Naive thymus-derived CD4-positive, alpha-beta T cell (primary cell): ENCODE measurements at regions of chr16 and their contacts with region 1.

Region 1: GRCh38 chr16:3530371-3530914 is 29.6 kb downstream of the CLUAP1 start:
- DNase-seq: no peak
- ATAC-seq: no peak
- H3K4me3 ChIP-seq: no peak overlapping the region
- H3K4me3 Mint-ChIP-seq: no peak overlapping the region
- H3K27ac ChIP-seq: no peak overlapping the region
- H3K27ac Mint-ChIP-seq: peak overlapping the region in 2 of 9 donors; percentile 17 to 56
- H3K4me1 ChIP-seq: no peaks in the 10 kb centered on the region
- H3K4me1 Mint-ChIP-seq: peaks cover 12 to 40% (median 32%) of the 10 kb centered on the region in 7 donors
- H3K27me3 ChIP-seq: no peaks in the 10 kb centered on the region
- H3K27me3 Mint-ChIP-seq: no peaks in the 10 kb centered on the region

Region 2: GRCh38 chr16:3590736-3591435 is 60.4 kb after region 1 on chr16:
- CTCF ChIA-PET with region 1: no interaction called
- POLR2A ChIA-PET with region 1: no interaction called
- intact Hi-C with region 1: no loop called
- DNase-seq: no peak
- ATAC-seq: no peak
- H3K4me3 ChIP-seq: no peak overlapping the region
- H3K4me3 Mint-ChIP-seq: no peak overlapping the region
- H3K27ac ChIP-seq: no peak overlapping the region
- H3K27ac Mint-ChIP-seq: peak overlapping the region in 1 of 9 donors; percentile 31
- H3K4me1 ChIP-seq: no peaks in the 10 kb centered on the region
- H3K4me1 Mint-ChIP-seq: peaks cover 0 to 11% (median 4%) of the 10 kb centered on the region in 7 donors
- H3K27me3 ChIP-seq: no peaks in the 10 kb centered on the region
- H3K27me3 Mint-ChIP-seq: no peaks in the 10 kb centered on the region

Region 3: DNA sequence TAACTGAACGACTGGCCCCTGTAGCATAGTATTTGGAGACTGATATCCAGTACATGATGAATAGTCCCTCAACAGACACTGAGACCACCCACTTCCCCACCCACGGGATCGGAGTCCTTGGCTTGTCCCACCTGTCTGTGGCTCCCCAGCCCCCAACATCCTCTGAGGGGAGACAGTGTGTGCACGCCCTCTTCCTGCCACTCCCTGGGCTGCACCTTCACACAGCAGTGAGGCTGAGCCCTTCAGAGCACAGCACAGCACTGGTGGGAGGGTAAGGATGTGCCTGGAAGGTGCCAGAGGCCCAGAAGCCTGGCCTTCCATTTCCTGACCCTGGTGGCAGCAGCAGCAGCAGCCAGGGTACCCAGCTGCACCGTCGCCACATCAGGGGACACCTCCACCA is 135.1 kb after region 1 on chr16:
- CTCF ChIA-PET with region 1: interaction called, 4 read pairs
- POLR2A ChIA-PET with region 1: no interaction called
- intact Hi-C with region 1: loop called in 1 of 2 experiments (anchors 1 kb)
- DNase-seq: peak in 7 of 9 donors; percentile 19 to 53 (median 51)
- ATAC-seq: peak; percentile 80
- H3K4me3 ChIP-seq: no peak overlapping the region
- H3K4me3 Mint-ChIP-seq: peak overlapping the region in 3 of 10 donors; percentile 11 to 13 (median 12)
- H3K27ac ChIP-seq: peak overlapping the region; percentile 36
- H3K27ac Mint-ChIP-seq: peak overlapping the region; percentile 55 to 87 (median 73)
- H3K4me1 ChIP-seq: peaks cover 9 to 13% of the 10 kb centered on the region in 2 donors
- H3K4me1 Mint-ChIP-seq: peaks cover 14 to 29% (median 19%) of the 10 kb centered on the region in 7 donors
- H3K27me3 ChIP-seq: no peaks in the 10 kb centered on the region
- H3K27me3 Mint-ChIP-seq: no peaks in the 10 kb centered on the region

Region 4: GRCh38 chr16:3909791-3910570 is 379.5 kb after region 1 on chr16:
- CTCF ChIA-PET with region 1: no interaction called
- POLR2A ChIA-PET with region 1: no interaction called
- intact Hi-C with region 1: no loop called
- DNase-seq: no peak
- ATAC-seq: no peak
- H3K4me3 ChIP-seq: no peak overlapping the region
- H3K4me3 Mint-ChIP-seq: no peak overlapping the region
- H3K27ac ChIP-seq: no peak overlapping the region
- H3K27ac Mint-ChIP-seq: no peak overlapping the region
- H3K4me1 ChIP-seq: no peaks in the 10 kb centered on the region
- H3K4me1 Mint-ChIP-seq: peaks cover 0 to 3% (median 0%) of the 10 kb centered on the region in 7 donors
- H3K27me3 ChIP-seq: no peaks in the 10 kb centered on the region
- H3K27me3 Mint-ChIP-seq: peaks cover 0 to 6% (median 0%) of the 10 kb centered on the region in 5 donors